ENCODE measurements at regions of chr4 and their contacts with region 1.

Region 1: DNA sequence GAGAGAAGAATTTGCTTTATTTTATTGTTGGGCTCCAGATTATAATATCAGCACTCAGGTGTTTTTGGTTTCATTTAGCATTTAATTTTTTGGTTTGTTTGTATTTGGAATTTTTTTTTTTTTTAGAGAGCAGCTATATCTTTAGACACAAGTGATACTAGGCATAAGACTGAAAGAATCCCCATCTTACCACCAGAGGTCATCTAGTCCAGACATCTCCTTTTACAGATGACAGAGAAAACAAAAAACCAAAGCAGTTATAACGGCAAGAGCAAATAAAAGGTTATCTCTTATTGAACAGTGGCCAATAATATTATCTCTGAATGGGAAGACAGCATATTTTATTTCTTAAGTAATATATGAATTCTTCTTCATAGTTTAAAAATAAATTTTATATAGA is 22.8 kb downstream of the USP38 start:
- DNase-seq: no peak
- ATAC-seq: peak in 1 of 2 donors; percentile 68
- H3K4me3 ChIP-seq: no peak overlapping the region
- H3K27ac ChIP-seq: peak overlapping the region in 3 of 4 donors; percentile 6 to 57 (median 53)
- H3K4me1 ChIP-seq: peaks cover 34 to 50% of the 10 kb centered on the region in 2 donors
- H3K27me3 ChIP-seq: no peaks in the 10 kb centered on the region
- CTCF ChIP-seq: peak in 3 of 5 experiments; percentile 16 to 43 (median 33)
- POLR2A ChIP-seq: no peak

Region 2: DNA sequence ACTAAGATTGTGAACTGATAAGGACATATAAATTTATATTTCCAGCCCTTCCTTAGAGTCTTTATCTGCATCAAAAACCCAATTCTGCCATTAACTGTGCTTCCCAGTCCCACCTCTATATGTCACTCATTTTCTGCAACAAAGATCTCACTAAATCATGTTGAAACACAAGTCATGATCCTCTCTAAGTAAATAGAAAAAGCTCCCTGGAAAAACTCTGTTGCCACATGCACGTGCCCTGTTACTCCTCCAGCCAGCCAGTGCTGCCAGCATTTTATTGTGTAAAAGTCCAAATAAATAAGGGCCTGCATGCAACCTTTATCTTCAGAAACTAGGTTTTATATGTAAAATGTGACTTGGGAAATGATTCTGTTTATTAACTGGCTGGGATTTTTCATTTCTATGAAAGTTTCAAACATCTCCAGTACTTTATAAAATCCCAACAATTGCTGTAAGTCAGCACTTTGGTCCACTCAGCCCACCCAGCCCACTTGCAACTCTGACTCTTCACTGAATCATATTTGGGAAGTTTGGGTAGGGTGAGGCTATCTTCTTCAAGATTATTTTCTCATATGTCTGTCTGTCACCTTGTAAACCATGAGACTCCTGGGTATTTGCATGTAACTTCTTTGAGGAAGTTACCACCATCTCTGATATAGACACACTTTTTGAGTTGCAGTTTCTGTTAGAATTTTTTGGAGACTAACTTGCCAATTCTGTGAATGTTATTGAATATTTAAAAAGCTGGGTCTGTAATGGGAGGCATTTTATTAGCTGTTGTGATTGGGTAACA is 266.0 kb after region 1 on chr4:
- in situ Hi-C with region 1: loop called in 2 of 4 experiments (anchors 10 to 25 kb)
- intact Hi-C with region 1: no loop called
- DNase-seq: no peak
- ATAC-seq: no peak
- H3K4me3 ChIP-seq: no peak overlapping the region
- H3K27ac ChIP-seq: no peak overlapping the region
- H3K4me1 ChIP-seq: no peaks in the 10 kb centered on the region
- H3K27me3 ChIP-seq: no peaks in the 10 kb centered on the region
- CTCF ChIP-seq: no peak
- POLR2A ChIP-seq: no peak

Measured in gastrocnemius medialis (tissue), 4 donors.